ENCODE measurements at regions of chr2 and their contacts with region 1.

Region 1: DNA sequence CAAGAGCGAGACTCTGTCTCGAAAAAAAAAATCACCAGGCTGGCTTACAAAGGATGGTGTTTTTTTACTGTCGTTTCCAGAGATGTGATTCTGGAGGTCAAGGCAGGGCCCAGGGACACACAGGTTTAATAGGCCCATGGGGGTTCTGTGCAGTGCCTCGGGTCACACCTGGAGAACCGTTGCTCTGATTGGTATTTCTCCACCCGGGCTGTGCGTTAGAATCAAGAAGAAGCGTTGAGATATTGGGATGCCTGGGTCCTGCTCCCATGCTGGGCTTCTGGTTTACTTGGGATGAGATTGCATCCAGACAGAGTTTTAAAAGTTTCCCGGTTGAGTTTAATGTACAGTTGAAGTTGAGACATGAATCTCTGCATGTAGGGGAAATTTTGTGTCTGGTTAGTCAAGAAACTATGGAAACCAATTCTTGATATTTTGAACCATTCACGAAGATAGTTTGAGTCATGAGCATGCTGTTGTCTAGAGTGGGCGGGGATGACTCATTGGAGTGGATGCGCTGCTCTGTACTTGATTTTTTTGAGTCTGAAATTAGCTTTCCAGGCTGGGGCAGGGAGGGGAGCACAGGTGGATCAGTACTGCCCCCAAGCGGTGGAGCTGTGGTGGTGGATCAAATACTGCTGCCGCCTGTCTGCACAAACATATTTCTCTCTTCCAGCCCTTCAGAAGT is 50.1 kb downstream of the GREB1 start:
- DNase-seq: peak; percentile 68 to 69
- H3K4me3 ChIP-seq: no peak overlapping the region
- H3K27ac ChIP-seq: no peak overlapping the region
- H3K4me1 ChIP-seq: no peaks in the 10 kb centered on the region
- H3K27me3 ChIP-seq: no peaks in the 10 kb centered on the region
- CTCF ChIP-seq: peak; percentile 31 to 82 (median 69)
- POLR2A ChIP-seq: no peak

Region 2: DNA sequence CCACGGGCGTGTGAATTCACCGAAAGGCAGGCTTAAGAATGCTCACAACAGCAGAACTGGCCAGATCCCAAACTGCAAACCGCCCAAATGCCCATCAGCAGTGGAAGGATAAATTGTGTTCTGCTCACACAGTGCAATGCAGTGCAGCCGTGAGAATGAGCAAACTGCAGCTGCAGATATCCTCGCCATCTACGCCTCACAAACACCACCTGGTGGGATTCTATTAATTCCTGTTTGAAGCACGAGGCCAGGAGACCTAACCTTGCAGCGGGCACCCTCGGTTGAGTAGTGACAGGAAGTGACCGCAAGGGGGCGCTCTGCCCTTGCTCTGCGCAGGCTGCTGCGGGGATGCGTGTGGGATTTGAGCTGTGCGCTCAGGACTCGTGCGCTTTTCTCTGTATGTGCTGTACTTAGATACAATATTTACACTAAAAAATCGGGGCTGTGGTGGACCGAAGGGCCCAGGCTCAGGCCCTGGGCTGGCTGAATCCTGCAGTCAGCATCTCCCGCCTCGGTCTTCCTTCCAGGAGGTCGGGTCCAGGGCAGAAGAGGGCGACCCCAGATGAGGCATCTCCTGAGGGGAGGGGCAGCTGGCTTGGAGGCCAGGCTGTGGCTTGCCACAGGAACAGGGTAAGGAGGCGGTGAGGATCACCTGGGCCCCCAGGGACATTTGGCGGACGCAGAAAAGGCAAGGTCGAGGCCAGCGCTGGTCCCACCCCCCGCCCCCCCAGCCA is 751.6 kb before region 1 on chr2:
- intact Hi-C with region 1: loop called (anchors 10 kb)
- DNase-seq: peak; percentile 75
- H3K4me3 ChIP-seq: no peak overlapping the region
- H3K27ac ChIP-seq: no peak overlapping the region
- H3K4me1 ChIP-seq: peaks cover 0 to 10% of the 10 kb centered on the region in 2 donors
- H3K27me3 ChIP-seq: no peaks in the 10 kb centered on the region
- CTCF ChIP-seq: peak; percentile 75 to 95 (median 92)
- POLR2A ChIP-seq: no peak

Region 3: DNA sequence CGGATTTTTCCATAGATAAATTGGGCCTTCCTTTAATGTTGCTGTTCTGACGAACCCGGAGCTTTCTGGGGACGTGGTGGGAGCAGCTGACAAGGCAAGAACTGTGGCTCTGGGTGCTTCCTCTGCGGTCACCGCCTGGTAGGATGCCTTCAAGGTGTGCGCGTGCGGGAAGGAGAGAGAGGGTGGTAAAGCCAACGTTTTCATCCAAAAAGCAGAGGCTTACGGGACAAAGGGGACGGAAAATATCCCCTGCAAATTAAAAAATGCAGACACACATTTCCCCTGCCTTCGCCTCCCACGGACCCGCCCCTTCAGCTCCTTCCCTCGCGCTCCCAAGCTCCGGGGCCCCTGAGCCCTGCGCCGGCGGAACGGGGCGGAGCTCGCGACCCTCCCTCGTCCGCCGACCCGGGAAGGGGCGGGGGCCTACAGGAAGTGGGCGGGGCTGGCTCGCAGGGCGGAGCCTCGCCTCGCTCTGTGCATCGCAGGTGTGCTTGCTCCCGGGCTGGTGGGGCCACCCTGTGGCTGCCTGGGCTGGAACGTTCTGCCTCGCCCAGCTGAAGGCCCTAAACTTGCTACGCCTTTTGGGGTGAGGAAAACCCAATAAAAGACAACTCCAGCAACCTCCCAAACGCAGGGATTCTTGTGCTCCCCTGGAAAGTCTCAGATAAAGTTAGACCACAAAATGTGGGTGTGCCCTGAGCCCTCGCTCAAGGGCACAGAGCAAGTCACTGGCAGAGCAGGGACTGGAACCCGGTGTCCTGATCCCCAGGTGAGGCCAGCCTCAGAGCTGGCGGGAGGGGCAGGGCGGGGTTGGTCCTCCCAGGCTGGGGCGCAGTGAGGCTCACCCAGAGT is 454.2 kb before region 1 on chr2:
- intact Hi-C with region 1: loop called (anchors 5 kb)
- DNase-seq: peak; percentile 78 to 80
- H3K4me3 ChIP-seq: peak overlapping the region in 1 of 3 donors; percentile 23
- H3K27ac ChIP-seq: peak overlapping the region in 2 of 3 donors; percentile 2 to 30
- H3K4me1 ChIP-seq: peaks cover 13 to 27% of the 10 kb centered on the region in 2 donors
- H3K27me3 ChIP-seq: no peaks in the 10 kb centered on the region
- CTCF ChIP-seq: peak in 3 of 6 experiments; percentile 29 to 55 (median 45)
- POLR2A ChIP-seq: peak in 1 of 2 donors; percentile 18

Region 4: DNA sequence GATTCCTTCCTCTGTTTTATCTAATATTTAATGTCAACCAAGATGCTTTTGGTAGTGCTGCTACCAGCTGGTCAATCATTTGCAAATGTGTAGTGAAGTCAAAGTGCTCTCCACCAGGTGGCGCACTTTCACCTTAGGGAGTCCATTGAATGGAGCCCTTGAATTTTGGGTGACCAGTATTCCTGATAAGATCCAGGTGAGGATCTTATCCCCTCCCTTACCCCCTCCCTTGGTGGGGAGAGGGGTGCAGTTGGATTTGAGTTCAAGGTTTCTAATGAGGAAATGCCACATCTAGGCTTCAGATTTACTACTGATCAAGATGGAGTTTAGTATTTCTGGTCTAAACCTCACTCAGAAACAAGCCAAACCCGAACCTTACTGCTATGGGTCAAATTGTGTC is 106.0 kb before region 1 on chr2:
- intact Hi-C with region 1: loop called (anchors 2 kb)
- DNase-seq: peak; percentile 94 to 96
- H3K4me3 ChIP-seq: no peak overlapping the region
- H3K27ac ChIP-seq: no peak overlapping the region
- H3K4me1 ChIP-seq: peaks cover 3 to 10% of the 10 kb centered on the region in 2 donors
- H3K27me3 ChIP-seq: peaks cover 4% of the 10 kb centered on the region
- CTCF ChIP-seq: peak; percentile 36 to 88 (median 78)
- POLR2A ChIP-seq: no peak

Region 5: GRCh38 chr2:11743846-11744553 is 160.0 kb after region 1 on chr2:
- intact Hi-C with region 1: no loop called
- DNase-seq: peak; percentile 97 to 98
- H3K4me3 ChIP-seq: no peak overlapping the region
- H3K27ac ChIP-seq: peak overlapping the region; percentile 67 to 81 (median 78)
- H3K4me1 ChIP-seq: peaks cover 31 to 47% of the 10 kb centered on the region in 2 donors
- H3K27me3 ChIP-seq: no peaks in the 10 kb centered on the region
- CTCF ChIP-seq: peak in 1 of 6 experiments; percentile 18
- POLR2A ChIP-seq: peak in 1 of 2 donors; percentile 41

Region 6: GRCh38 chr2:11829947-11830707 is 246.1 kb after region 1 on chr2:
- intact Hi-C with region 1: no loop called
- DNase-seq: peak; percentile 73 to 83
- H3K4me3 ChIP-seq: no peak overlapping the region
- H3K27ac ChIP-seq: peak overlapping the region; percentile 65 to 91 (median 71)
- H3K4me1 ChIP-seq: peaks cover 18 to 20% of the 10 kb centered on the region in 2 donors
- H3K27me3 ChIP-seq: no peaks in the 10 kb centered on the region
- CTCF ChIP-seq: peak in 3 of 6 experiments; percentile 28 to 43 (median 35)
- POLR2A ChIP-seq: no peak

Measured in thyroid gland (tissue), 4 donors.